B cell (primary cell): ENCODE measurements at regions of chr13 and their contacts with region 1.

Region 1: GRCh38 chr13:48580185-48580803 is 47.4 kb upstream of the RCBTB2 start:
- DNase-seq: peak; percentile 78
- ATAC-seq: peak; percentile 47
- H3K4me3 ChIP-seq: no peak overlapping the region
- H3K4me3 Mint-ChIP-seq: no peak overlapping the region
- H3K27ac ChIP-seq: no peak overlapping the region
- H3K27ac Mint-ChIP-seq: peak overlapping the region; percentile 41
- H3K4me1 ChIP-seq: peaks cover 18 to 19% of the 10 kb centered on the region in 2 donors
- H3K4me1 Mint-ChIP-seq: peaks cover 17% of the 10 kb centered on the region
- H3K27me3 ChIP-seq: peaks cover 0 to 84% (median 71%) of the 10 kb centered on the region in 4 experiments
- H3K27me3 Mint-ChIP-seq: peaks cover 72% of the 10 kb centered on the region
- CTCF ChIP-seq: peak; percentile 85

Region 2: DNA sequence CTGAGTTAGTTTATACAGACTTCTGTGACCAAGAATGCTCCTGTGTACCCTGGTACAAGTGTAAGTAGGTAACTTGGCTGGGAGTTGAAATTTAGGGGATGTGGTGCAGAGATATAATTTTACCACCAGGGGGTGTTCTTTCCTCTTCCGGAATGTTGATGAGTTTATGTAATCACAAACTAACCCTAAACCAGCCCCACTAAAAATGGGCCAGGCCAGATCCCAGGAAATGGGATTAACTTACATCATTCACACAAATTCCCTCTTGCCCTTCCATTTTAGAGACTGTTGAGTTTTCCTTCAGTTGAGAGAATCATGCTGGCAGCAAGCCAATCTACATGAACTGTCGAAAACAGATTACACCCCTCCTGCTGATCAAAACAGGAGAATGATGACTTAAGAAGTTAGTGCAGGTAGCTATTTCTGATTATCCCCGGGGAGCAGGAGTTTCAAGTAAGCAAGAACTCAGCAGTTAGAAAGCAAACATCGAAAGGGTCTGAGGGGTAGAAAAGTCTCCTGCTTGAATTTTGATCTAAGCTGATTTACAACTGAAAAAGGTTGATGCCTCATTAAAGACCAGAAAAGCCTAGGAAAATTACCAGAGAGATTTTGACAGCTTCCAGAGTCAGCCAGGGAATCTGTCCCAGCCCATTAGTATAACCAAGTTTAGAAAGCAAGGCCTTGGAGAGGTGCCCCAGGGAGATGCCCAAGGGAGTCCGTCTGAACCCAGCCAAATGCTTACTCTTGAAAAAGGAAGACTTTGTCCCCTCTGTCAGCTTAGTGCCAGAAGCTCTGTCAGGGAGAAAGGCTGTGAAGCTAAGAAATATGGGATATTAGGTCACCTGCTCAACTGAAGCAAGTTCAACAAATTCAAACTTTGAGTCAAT is 453.1 kb before region 1 on chr13:
- CTCF ChIA-PET with region 1: interaction called, 52 read pairs
- POLR2A ChIA-PET with region 1: interaction called, 3 read pairs
- intact Hi-C with region 1: loop called (anchors 1 kb)
- DNase-seq: peak; percentile 81
- ATAC-seq: peak; percentile 81
- H3K4me3 ChIP-seq: no peak overlapping the region
- H3K4me3 Mint-ChIP-seq: peak overlapping the region; percentile 3
- H3K27ac ChIP-seq: no peak overlapping the region
- H3K27ac Mint-ChIP-seq: no peak overlapping the region
- H3K4me1 ChIP-seq: peaks cover 10 to 12% of the 10 kb centered on the region in 2 donors
- H3K4me1 Mint-ChIP-seq: peaks cover 7% of the 10 kb centered on the region
- H3K27me3 ChIP-seq: no peaks in the 10 kb centered on the region
- H3K27me3 Mint-ChIP-seq: peaks cover 7% of the 10 kb centered on the region
- CTCF ChIP-seq: peak; percentile 82

Region 3: DNA sequence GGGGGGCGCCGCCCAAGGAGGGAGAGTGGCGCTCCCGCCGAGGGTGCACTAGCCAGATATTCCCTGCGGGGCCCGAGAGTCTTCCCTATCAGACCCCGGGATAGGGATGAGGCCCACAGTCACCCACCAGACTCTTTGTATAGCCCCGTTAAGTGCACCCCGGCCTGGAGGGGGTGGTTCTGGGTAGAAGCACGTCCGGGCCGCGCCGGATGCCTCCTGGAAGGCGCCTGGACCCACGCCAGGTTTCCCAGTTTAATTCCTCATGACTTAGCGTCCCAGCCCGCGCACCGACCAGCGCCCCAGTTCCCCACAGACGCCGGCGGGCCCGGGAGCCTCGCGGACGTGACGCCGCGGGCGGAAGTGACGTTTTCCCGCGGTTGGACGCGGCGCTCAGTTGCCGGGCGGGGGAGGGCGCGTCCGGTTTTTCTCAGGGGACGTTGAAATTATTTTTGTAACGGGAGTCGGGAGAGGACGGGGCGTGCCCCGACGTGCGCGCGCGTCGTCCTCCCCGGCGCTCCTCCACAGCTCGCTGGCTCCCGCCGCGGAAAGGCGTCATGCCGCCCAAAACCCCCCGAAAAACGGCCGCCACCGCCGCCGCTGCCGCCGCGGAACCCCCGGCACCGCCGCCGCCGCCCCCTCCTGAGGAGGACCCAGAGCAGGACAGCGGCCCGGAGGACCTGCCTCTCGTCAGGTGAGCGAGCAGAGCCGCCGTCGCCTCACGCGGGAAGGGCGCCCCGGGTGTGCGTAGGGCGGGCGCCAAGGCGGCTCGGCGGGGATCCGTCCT is 276.7 kb before region 1 on chr13 and contains the start of gene RB1:
- CTCF ChIA-PET with region 1: interaction called, 4 read pairs
- POLR2A ChIA-PET with region 1: no interaction called
- intact Hi-C with region 1: loop called (anchors 1 kb)
- DNase-seq: peak; percentile 97
- ATAC-seq: peak; percentile 69
- H3K4me3 ChIP-seq: peak within 1 kb of the TSS; percentile 70 to 98 (median 89)
- H3K4me3 Mint-ChIP-seq: peak within 1 kb of the TSS; percentile 99
- H3K27ac ChIP-seq: peak within 1 kb of the TSS; percentile 99 to 100
- H3K27ac Mint-ChIP-seq: peak within 1 kb of the TSS; percentile 100
- H3K4me1 ChIP-seq: peaks cover 22 to 26% of the 10 kb centered on the region in 2 donors
- H3K4me1 Mint-ChIP-seq: peaks cover 34% of the 10 kb centered on the region
- H3K27me3 ChIP-seq: no peaks in the 10 kb centered on the region
- H3K27me3 Mint-ChIP-seq: no peaks in the 10 kb centered on the region
- CTCF ChIP-seq: no peak
- total RNA-seq, gene RB1: 70.4 and 74.8 TPM in 2 replicates

Region 4: GRCh38 chr13:48400850-48401291 is 179.4 kb before region 1 on chr13:
- CTCF ChIA-PET with region 1: interaction called, 14 read pairs
- POLR2A ChIA-PET with region 1: no interaction called
- intact Hi-C with region 1: loop called (anchors 2 kb)
- DNase-seq: no peak
- ATAC-seq: no peak
- H3K4me3 ChIP-seq: no peak overlapping the region
- H3K4me3 Mint-ChIP-seq: no peak overlapping the region
- H3K27ac ChIP-seq: no peak overlapping the region
- H3K27ac Mint-ChIP-seq: no peak overlapping the region
- H3K4me1 ChIP-seq: no peaks in the 10 kb centered on the region
- H3K4me1 Mint-ChIP-seq: peaks cover 10% of the 10 kb centered on the region
- H3K27me3 ChIP-seq: no peaks in the 10 kb centered on the region
- H3K27me3 Mint-ChIP-seq: no peaks in the 10 kb centered on the region
- CTCF ChIP-seq: no peak

Region 5: DNA sequence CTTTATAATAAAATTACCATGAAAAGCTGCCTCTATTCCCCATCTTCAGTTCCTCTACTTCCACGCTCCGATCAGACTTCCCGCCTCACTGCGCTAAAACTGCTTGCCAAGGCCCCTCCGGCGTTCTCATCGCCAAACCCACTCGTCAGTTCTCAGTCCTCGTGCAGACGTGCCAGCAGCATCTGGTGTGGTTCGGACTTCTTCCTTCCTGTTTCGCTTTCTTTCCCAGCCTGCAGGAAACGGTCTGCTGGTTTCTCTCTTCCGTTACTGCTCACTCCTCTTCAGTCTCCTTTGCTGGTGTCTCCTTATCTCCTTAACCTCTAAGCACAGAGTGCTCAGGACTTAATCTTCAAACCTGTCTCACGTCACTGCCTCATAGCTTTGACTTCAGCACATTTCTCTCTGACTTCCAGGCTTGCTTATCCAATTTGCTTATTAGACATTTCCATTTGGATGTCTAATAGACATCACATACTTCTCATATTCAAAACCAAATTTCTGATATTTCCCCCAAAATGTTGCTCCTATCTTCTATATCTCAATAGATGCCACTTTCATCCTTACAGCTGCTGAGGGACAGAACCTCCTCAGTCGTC is 87.7 kb before region 1 on chr13:
- CTCF ChIA-PET with region 1: interaction called, 6 read pairs
- POLR2A ChIA-PET with region 1: no interaction called
- intact Hi-C with region 1: loop called (anchors 1 kb)
- DNase-seq: peak; percentile 91
- ATAC-seq: peak; percentile 86
- H3K4me3 ChIP-seq: peak overlapping the region; percentile 10 to 65 (median 32)
- H3K4me3 Mint-ChIP-seq: no peak overlapping the region
- H3K27ac ChIP-seq: peak overlapping the region; percentile 63 to 66
- H3K27ac Mint-ChIP-seq: no peak overlapping the region
- H3K4me1 ChIP-seq: peaks cover 57% of the 10 kb centered on the region in 2 donors
- H3K4me1 Mint-ChIP-seq: peaks cover 38% of the 10 kb centered on the region
- H3K27me3 ChIP-seq: no peaks in the 10 kb centered on the region
- H3K27me3 Mint-ChIP-seq: no peaks in the 10 kb centered on the region
- CTCF ChIP-seq: no peak

Region 6: DNA sequence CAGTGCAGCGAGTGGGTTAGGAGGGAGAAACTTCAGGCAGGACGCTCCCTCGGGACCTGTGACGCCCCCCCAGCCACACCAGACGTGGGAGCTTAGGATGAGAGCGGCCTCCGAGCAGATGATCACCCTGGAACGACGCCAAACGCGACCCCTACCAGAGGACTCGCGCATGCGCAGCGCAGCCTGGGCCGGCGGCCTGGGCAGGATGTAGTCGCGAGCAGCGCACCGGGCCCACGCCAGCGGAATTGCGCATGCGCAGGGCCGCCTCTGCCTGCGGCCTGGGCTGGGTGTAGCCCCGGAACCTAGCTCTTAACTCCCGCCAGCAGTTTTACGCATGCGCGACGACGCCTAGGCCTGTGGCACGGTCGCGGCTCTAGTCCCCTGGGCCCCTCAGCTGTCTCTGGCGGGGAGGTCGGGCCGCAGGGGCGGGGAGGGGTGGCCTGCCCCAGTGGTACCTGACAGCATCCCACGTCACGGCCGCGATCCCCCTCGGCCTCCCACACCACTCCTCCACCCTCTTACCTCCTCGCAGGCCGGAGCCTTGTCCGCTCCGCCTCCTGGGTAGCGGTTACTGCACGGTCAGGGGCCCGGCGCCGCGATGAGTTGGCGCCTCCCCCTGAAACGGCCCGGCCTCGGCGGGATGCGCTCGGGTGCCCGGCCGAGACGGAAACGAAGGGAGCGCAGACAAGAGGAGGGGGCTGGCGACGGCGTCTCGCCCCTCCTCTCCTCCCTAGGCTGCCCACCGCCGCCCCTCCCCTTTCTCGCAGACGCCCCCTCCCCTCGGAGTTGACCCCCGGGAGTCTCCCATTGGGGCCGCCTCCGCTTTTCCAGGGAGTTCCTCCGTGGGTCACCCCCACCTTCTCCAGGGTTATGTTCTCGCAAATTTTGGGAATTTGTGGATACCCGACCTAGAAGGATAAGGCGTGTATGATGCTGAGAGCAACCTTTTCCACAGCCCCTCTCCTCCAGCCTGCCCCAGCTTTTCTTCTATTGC is 47.5 kb before region 1 on chr13 and contains the start of gene RCBTB2:
- CTCF ChIA-PET with region 1: interaction called, 5 read pairs
- POLR2A ChIA-PET with region 1: interaction called, 5 read pairs
- intact Hi-C with region 1: loop called (anchors 1 kb)
- DNase-seq: peak; percentile 98
- ATAC-seq: peak; percentile 89
- H3K4me3 ChIP-seq: peak within 1 kb of the TSS; percentile 54 to 92 (median 82)
- H3K4me3 Mint-ChIP-seq: peak within 1 kb of the TSS; percentile 97
- H3K27ac ChIP-seq: peak within 1 kb of the TSS; percentile 63 to 85
- H3K27ac Mint-ChIP-seq: peak within 1 kb of the TSS; percentile 98
- H3K4me1 ChIP-seq: peaks cover 20 to 24% of the 10 kb centered on the region in 2 donors
- H3K4me1 Mint-ChIP-seq: peaks cover 26% of the 10 kb centered on the region
- H3K27me3 ChIP-seq: peaks cover 0 to 15% (median 11%) of the 10 kb centered on the region in 4 experiments
- H3K27me3 Mint-ChIP-seq: peaks cover 22% of the 10 kb centered on the region
- CTCF ChIP-seq: no peak
- total RNA-seq, gene RCBTB2: 2.7 and 3.7 TPM in 2 replicates

Region 7: DNA sequence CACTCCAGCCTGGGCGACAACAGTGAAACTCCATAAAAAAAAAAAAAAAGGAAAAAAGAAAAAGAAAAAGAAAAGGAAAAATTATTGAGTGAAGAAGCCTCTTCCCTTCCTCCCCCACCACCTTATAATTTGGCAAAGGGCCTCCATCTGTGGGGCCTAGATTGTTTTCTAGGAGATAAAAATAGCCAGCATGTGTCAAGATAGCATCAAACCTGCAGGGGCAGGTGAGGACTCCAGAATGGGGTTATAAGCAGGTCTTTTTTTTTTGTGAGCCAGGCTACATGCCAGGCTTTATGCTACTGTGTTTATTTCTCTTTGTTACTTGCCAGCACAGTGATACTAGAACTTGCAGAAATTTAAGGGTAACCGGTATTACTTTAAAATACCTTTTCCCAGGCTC is 1404.8 kb after region 1 on chr13:
- CTCF ChIA-PET with region 1: no interaction called
- POLR2A ChIA-PET with region 1: no interaction called
- intact Hi-C with region 1: no loop called
- DNase-seq: no peak
- ATAC-seq: no peak
- H3K4me3 ChIP-seq: no peak overlapping the region
- H3K4me3 Mint-ChIP-seq: no peak overlapping the region
- H3K27ac ChIP-seq: no peak overlapping the region
- H3K27ac Mint-ChIP-seq: no peak overlapping the region
- H3K4me1 ChIP-seq: no peaks in the 10 kb centered on the region
- H3K4me1 Mint-ChIP-seq: no peaks in the 10 kb centered on the region
- H3K27me3 ChIP-seq: no peaks in the 10 kb centered on the region
- H3K27me3 Mint-ChIP-seq: no peaks in the 10 kb centered on the region
- CTCF ChIP-seq: no peak